GM10248 (cell line): ENCODE measurements at regions of chr6 and their contacts with region 1.

Region 1: DNA sequence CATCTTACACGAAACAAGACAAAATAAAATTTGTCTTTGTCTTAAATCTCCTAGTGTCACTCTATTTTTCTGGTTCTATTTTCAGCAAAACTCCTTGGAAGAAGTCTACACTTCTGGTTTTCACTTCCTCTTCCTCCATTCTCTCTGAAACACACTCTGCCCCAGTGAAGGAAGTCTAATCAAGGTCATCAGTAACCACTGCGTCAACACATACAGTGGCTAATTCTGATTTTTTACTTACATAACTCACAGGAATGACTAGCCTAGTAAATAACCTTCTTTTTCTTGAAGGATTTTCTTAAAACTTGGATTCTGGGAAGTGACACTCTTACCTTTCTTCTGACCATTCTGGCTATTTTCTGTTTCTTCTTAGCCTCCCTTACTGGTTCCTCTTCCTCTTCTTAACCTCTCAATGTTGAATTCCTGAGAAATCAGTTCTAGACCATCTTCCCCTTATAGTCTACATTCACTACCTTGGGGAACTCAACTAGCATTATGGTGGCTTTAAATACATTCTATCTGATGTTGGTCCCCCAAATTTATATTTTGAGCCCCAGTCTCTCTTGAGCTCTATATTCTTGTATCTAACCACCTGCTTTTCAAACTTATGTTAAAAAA is 37.5 kb downstream of the AIG1 start:
- DNase-seq: peak; percentile 26
- CTCF ChIP-seq: no peak

Region 2: GRCh38 chr6:141925001-141925400 is 1173.2 kb before region 1 on chr6:
- CTCF ChIA-PET with region 1: no interaction called
- POLR2A ChIA-PET with region 1: no interaction called
- DNase-seq: no peak
- CTCF ChIP-seq: no peak

Region 3: GRCh38 chr6:142902636-142903053 is 195.5 kb before region 1 on chr6:
- CTCF ChIA-PET with region 1: no interaction called
- POLR2A ChIA-PET with region 1: no interaction called
- DNase-seq: no peak
- CTCF ChIP-seq: no peak

Region 4: DNA sequence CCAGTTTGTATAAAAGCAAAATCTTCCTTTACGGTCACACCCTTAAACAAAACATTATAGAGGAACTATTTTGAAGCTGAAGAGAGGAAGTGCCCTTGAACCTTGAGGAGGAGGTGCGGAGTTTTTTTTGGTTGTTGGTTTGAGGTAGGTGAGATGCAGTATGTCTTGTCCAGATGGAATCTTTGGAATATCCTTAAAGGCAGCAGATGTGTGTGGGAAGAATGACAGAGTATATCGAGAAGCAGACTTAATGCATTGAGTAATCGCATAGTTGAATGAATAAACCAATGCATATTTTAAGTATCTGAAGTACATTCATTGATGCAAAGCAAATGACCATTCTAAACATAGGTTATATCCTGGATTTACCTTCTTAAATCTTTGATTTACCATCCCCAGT is 12.4 kb after region 1 on chr6:
- CTCF ChIA-PET with region 1: interaction called, 13 read pairs
- POLR2A ChIA-PET with region 1: no interaction called
- DNase-seq: no peak
- CTCF ChIP-seq: no peak